Upper lobe of right lung (tissue), 1 donor: ENCODE measurements at regions of chr2 and their contacts with region 1.

Region 1: GRCh38 chr2:233443468-233444183 is 89.3 kb downstream of the DGKD start:
- DNase-seq: peak; percentile 86
- ATAC-seq: peak; percentile 84
- H3K4me3 ChIP-seq: no peak overlapping the region
- H3K27ac ChIP-seq: no peak overlapping the region
- H3K4me1 ChIP-seq: no peaks in the 10 kb centered on the region
- H3K27me3 ChIP-seq: no peaks in the 10 kb centered on the region
- CTCF ChIP-seq: peak; percentile 80

Region 2: DNA sequence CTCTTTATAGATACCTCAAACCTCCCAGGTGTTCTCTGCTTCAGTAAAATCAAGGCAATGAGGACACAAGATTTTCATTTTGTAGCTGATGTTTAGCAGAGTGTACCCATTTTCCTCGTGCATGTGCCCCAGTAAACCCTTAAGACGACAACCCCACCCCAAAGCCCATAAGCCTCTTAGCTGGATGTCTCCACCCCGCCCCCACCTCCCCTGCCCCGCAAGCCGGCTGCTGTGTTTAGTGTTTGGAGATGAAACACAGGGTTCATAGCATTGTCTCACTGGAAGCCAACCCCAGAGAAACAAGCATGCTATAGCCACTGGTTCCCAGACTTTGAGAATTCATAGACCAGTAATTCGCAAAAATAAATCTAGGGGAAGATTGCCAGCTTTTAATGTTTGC is 141.8 kb before region 1 on chr2:
- intact Hi-C with region 1: no loop called
- DNase-seq: no peak
- ATAC-seq: no peak
- H3K4me3 ChIP-seq: no peak overlapping the region
- H3K27ac ChIP-seq: no peak overlapping the region
- H3K4me1 ChIP-seq: no peaks in the 10 kb centered on the region
- H3K27me3 ChIP-seq: no peaks in the 10 kb centered on the region
- CTCF ChIP-seq: no peak

Region 3: DNA sequence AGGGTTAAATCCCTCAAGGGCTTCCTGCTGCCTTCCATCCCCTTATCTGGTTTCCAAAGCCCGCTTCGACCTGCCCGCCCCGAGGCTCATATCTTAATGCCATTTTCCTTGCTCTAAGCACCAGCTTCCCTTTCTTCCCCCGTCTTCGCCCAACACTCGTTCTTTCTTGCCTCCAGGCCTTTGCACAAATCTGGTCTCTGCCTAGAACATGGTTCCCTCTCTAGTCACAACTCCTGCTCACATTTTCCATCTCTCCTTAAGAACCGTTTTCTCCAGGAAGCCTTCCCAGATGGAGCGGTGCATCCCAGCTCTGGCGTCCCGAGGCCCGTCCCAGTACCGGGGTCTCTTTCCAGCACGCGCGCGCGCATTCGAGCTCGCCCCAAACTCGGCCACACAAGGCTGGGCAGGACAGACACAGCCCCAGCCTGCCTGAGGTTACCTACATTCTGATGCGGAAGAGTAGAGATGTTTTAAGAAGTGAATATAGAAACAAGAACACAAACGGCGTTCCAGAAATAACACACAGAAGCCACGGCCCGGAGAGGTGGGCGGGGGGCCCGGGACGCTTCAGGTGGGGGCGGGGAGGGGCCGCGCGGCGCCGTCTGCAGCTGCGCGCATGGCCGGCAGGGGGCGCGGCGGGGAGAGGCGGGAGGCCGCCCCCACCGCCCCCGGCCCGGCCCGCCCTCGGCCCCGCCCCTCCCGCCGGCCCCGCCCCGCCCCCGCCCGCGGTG is 89.7 kb before region 1 on chr2 and contains the start of gene DGKD:
- intact Hi-C with region 1: loop called (anchors 10 kb)
- DNase-seq: peak; percentile 85
- ATAC-seq: peak; percentile 95
- H3K4me3 ChIP-seq: peak within 1 kb of the TSS; percentile 68
- H3K27ac ChIP-seq: peak within 1 kb of the TSS; percentile 51
- H3K4me1 ChIP-seq: peaks cover 17% of the 10 kb centered on the region
- H3K27me3 ChIP-seq: no peaks in the 10 kb centered on the region
- CTCF ChIP-seq: no peak
- total RNA-seq, gene DGKD: 86.7 TPM